ENCODE measurements at regions of chr19 and their contacts with region 1.

Region 1: DNA sequence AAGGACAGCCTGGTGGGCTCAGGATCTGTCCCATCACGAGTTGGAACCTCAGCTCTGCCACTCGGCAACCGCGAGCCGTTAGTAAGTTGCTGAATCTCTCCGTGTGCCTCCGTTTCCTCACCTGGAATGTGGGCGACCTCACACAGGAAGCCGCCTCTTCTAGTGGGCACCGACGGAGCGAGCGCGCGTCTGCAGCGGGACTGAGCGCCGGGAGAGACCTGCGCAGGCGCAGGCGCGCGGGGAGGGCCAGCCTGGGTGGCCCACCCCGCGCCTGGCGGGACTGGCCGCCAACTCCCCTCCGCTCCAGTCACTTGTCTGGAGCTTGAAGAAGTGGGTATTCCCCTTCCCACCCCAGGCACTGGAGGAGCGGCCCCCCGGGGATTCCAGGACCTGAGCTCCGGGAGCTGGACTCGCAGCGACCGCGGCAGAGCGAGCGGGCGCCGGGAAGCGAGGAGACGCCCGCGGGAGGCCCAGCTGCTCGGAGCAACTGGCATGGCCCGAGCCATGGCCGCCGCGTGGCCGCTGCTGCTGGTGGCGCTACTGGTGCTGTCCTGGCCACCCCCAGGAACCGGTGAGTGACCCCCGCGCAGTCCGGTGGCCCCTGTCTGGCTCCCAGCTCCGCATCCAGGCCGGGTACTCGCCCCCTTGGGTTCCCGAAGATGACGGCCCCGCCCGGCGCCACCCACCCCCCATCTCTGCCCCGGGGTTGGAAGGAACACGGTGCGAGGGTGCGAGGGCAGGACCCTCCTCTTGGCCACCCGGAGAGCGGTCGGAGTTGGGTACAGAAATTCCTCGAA is at the start of gene PVR:
- DNase-seq: no peak
- H3K4me3 ChIP-seq: peak within 1 kb of the TSS; percentile 96
- H3K27ac ChIP-seq: peak within 1 kb of the TSS; percentile 75
- H3K27me3 ChIP-seq: no peaks in the 10 kb centered on the region
- CTCF ChIP-seq: no peak; the same call in 1 of the 2 replicates
- polyA plus RNA-seq, gene PVR: 125 and 151 TPM in 2 replicates

Region 2: DNA sequence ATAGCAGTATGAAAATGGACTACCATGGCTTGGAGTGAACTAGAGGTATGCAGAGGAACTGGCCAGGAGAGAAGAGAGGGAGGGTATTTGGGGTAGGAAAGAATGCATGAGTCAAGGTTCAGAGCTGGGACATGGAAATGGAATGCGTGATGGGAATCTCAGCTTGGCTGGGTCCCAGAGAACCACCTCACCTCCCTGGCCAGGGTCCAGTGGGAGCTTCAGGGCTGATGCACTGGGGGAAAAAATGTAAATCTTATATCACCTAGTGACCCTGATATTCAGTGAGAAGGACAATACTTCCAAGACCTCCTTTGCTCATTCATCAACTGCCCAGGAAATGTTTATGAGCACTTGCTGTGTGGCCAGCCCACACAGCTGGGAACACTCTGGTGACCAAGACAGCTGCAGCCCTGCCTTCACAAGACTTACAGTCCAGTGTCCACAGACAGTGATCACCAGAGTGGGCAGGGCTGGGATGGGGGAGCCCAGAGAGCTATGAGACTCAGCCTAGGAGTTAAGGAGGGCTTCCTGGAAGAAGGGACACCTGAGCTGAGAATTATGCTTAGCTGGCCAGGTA is 17.7 kb before region 1 on chr19:
- CTCF ChIA-PET with region 1: no interaction called
- POLR2A ChIA-PET with region 1: interaction called, 12 read pairs
- DNase-seq: peak; percentile 97
- H3K4me3 ChIP-seq: no peak overlapping the region
- H3K27ac ChIP-seq: peak overlapping the region; percentile 92
- H3K27me3 ChIP-seq: no peaks in the 10 kb centered on the region
- CTCF ChIP-seq: no peak